H1 (cell line): ENCODE measurements at regions of chr16 and their contacts with region 1.

Region 1: DNA sequence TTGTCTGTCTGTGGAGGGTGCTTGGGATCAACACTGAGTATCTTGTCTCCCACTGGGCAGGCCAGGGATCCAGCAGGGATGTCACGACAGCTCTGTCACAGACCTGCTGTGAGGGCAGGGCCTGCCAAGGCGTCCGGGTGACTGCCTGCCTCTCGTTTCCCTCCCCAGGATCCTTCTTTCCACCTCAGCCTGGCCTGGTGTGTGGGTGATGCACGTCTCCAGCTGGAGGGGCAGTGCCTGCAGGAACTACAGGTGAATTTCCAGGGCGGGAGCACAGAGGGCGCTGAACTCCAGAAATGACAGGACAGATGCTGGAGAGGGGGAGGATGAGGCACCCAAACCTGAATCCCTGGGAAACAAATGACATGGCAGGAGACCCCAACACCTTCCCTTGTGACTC is 6.8 kb upstream of the MMP15 start:
- DNase-seq: peak in 1 of 2 experiments; percentile 69
- H3K4me3 ChIP-seq: no peak overlapping the region
- H3K27ac ChIP-seq: no peak overlapping the region
- H3K4me1 ChIP-seq: peaks cover 0 to 12% (median 7%) of the 10 kb centered on the region in 4 experiments; a peak in 5 of 7 replicates
- H3K27me3 ChIP-seq: no peaks in the 10 kb centered on the region; a peak in 2 of 7 replicates
- CTCF ChIP-seq: peak; percentile 54 to 76 (median 74)
- EP300 ChIP-seq: no peak
- POLR2A ChIP-seq: no peak
- RAD21 ChIP-seq: peak; percentile 52 to 64; a peak in 3 of 4 replicates

Region 2: DNA sequence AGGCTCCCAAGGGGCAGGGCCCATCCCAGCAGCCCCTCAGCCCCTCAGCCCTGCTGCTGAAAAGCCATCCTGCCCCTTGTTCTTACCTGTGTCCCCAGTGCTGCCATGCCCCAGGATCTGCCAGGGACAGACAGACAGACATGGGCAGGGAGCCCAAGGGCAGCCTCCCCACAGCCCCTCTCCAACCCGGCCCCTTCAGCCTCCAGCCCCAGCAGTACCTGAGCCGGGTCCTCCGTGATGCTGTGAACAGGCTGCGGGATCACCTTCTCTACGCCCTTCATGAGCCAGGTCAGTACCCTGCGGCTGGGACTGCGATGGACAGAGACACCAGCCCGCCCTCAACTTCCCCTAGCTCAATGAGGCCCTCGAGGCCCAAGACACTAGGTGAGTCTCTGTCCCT is 56.0 kb before region 1 on chr16:
- CTCF ChIA-PET with region 1: no interaction called
- POLR2A ChIA-PET with region 1: no interaction called
- DNase-seq: no peak
- H3K4me3 ChIP-seq: no peak overlapping the region
- H3K27ac ChIP-seq: no peak overlapping the region
- H3K4me1 ChIP-seq: peaks cover 0 to 7% (median 5%) of the 10 kb centered on the region in 4 experiments; a peak in 6 of 7 replicates
- H3K27me3 ChIP-seq: no peaks in the 10 kb centered on the region
- CTCF ChIP-seq: no peak
- EP300 ChIP-seq: no peak
- POLR2A ChIP-seq: no peak
- RAD21 ChIP-seq: no peak

Region 3: DNA sequence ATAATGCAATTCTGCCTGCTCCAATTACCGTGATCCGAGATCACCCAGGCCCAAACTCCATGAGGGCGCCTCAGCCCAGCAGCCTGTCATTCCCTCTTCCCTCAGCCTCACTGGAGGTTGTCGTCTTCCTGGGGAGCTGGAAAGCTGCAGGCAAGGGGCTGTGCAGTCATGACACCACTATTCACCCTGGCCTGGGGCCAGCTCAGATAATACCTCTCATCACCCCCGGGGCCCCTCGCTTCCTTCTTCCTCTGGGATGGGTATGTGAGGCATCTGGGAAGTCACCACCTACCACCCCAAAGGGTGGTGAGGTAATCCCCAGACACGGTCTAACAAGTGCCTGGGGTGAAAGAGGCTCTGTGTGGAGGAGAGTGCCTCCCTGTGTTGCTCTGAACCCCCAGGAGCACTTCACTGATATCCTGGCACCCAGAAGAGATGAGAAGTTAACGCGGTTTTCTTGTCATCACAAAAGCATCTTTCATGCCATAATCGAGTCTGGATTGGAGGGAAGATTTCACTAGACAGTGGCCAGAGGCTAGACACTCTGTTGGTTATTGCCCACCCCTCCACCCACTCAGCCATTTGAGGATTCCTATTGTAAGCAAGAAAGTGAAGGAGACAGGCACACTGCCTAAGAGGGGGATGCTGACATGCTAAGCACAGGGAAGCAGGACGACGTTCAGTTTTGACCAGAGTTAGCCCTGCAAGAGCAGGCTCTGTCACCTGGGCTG is 91.9 kb after region 1 on chr16:
- CTCF ChIA-PET with region 1: interaction called, 362 read pairs
- POLR2A ChIA-PET with region 1: interaction called, 3 read pairs
- DNase-seq: no peak
- H3K4me3 ChIP-seq: no peak overlapping the region
- H3K27ac ChIP-seq: no peak overlapping the region
- H3K4me1 ChIP-seq: peaks cover 9 to 24% (median 21%) of the 10 kb centered on the region in 4 experiments
- H3K27me3 ChIP-seq: no peaks in the 10 kb centered on the region
- CTCF ChIP-seq: no peak
- EP300 ChIP-seq: no peak
- POLR2A ChIP-seq: no peak
- RAD21 ChIP-seq: peak in 1 of 2 experiments; percentile 27; a peak in 1 of 4 replicates